ENCODE measurements at regions of chr7 and their contacts with region 1.

Region 1: GRCh38 chr7:85041605-85042216 is 145.1 kb downstream of the SEMA3D start:
- DNase-seq: no peak
- H3K4me3 ChIP-seq: no peak overlapping the region
- H3K27ac ChIP-seq: no peak overlapping the region
- H3K4me1 ChIP-seq: no peaks in the 10 kb centered on the region
- H3K27me3 ChIP-seq: no peaks in the 10 kb centered on the region
- CTCF ChIP-seq: peak; percentile 19 to 58 (median 48)
- POLR2A ChIP-seq: no peak

Region 2: GRCh38 chr7:85554236-85555178 is 512.8 kb after region 1 on chr7:
- intact Hi-C with region 1: loop called (anchors 10 kb)
- DNase-seq: no peak
- H3K4me3 ChIP-seq: no peak overlapping the region
- H3K27ac ChIP-seq: no peak overlapping the region
- H3K4me1 ChIP-seq: no peaks in the 10 kb centered on the region
- H3K27me3 ChIP-seq: no peaks in the 10 kb centered on the region
- CTCF ChIP-seq: peak; percentile 15 to 55 (median 43)
- POLR2A ChIP-seq: no peak

Measured in vagina (tissue), 2 donors.